ENCODE measurements at regions of chr4 and their contacts with region 1.

Region 1: GRCh38 chr4:89110986-89111832 is at the start of gene TIGD2:
- DNase-seq: peak; percentile 90
- H3K4me3 Mint-ChIP-seq: peak within 1 kb of the TSS; percentile 74
- H3K27ac Mint-ChIP-seq: no peak within 1 kb of the TSS
- H3K4me1 Mint-ChIP-seq: peaks cover 15% of the 10 kb centered on the region
- H3K27me3 Mint-ChIP-seq: peaks cover 11% of the 10 kb centered on the region
- total RNA-seq, gene TIGD2: 1.1 to 1.4 TPM

Region 2: DNA sequence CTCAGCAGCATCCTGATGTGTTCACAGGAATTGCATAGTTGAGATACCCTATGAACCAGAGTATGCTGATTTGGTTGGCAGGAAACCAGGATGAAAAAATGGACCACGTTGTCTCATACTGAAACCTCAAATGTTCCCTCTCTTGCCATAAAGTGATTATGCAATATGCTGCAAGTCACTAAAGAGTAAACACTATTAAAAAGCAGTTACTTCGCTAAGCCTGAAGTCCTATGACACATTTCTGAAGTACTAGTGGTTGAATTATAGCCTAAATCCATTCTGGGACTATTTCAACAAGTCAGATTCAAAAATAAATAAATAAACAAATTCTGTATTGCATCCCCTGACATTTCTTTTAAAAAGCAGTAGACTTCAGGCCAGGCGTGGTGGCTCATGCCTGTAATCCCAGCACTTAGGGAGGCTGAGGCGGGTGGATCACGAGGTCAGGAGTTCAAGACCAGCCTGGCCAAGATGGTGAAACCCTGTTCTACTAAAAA is 307.6 kb before region 1 on chr4:
- CTCF ChIA-PET with region 1: no interaction called
- POLR2A ChIA-PET with region 1: no interaction called
- intact Hi-C with region 1: loop called (anchors 5 kb)
- DNase-seq: peak; percentile 26
- H3K4me3 Mint-ChIP-seq: no peak overlapping the region
- H3K27ac Mint-ChIP-seq: no peak overlapping the region
- H3K4me1 Mint-ChIP-seq: peaks cover 18% of the 10 kb centered on the region
- H3K27me3 Mint-ChIP-seq: peaks cover 7% of the 10 kb centered on the region

Region 3: GRCh38 chr4:88964450-88964849 is 146.8 kb before region 1 on chr4:
- CTCF ChIA-PET with region 1: interaction called, 3 read pairs
- POLR2A ChIA-PET with region 1: no interaction called
- intact Hi-C with region 1: loop called (anchors 10 kb)
- DNase-seq: peak; percentile 15
- H3K4me3 Mint-ChIP-seq: no peak overlapping the region
- H3K27ac Mint-ChIP-seq: no peak overlapping the region
- H3K4me1 Mint-ChIP-seq: peaks cover 9% of the 10 kb centered on the region
- H3K27me3 Mint-ChIP-seq: peaks cover 2% of the 10 kb centered on the region

Region 4: DNA sequence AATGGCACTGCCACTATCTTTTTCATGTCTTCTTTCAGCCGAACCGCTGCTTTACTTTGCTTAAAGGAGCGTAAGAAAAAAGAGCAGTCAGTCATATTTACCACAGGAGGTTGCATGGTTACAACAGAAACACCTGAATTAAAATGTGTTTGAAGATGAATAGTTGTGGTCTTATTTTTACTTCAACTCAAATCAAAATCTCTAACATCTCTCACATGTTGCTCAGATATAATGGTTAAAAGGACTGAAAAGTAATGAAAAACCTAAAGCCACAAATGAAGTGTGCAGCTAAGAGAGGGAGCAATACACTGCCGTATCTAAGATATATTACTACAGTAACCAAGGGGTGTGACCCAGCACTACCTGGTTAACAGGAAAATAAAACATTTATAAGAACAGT is 81.6 kb before region 1 on chr4:
- CTCF ChIA-PET with region 1: no interaction called
- POLR2A ChIA-PET with region 1: no interaction called
- intact Hi-C with region 1: loop called (anchors 1 kb)
- DNase-seq: no peak
- H3K4me3 Mint-ChIP-seq: no peak overlapping the region
- H3K27ac Mint-ChIP-seq: no peak overlapping the region
- H3K4me1 Mint-ChIP-seq: peaks cover 12% of the 10 kb centered on the region
- H3K27me3 Mint-ChIP-seq: no peaks in the 10 kb centered on the region

Region 5: DNA sequence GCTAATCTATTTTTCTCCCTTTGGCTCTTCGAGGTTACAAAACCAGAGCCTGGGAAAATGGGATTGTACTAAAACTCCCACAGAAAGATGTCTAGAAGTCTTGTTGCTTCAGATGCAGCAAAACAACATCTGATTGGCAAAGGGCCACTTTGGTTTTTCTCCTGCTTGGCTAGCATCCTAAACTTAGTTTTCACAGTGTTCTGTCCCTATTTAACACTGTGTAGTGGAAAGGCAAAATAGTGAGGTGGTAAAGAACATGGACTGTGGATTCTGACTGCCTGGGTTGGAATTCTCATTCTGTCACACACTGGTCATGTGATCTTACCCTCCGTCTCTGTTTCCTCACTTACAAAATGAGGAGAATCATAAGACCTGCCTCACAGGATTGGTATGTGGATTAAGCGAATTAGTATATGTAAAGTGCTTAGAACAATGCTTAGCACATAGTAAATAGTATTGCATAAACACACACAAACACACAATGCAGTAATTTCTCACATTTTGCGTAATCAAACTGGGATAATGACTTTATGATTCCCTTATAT is 23.6 kb after region 1 on chr4:
- CTCF ChIA-PET with region 1: no interaction called
- POLR2A ChIA-PET with region 1: no interaction called
- intact Hi-C with region 1: no loop called
- DNase-seq: no peak
- H3K4me3 Mint-ChIP-seq: no peak overlapping the region
- H3K27ac Mint-ChIP-seq: no peak overlapping the region
- H3K4me1 Mint-ChIP-seq: no peaks in the 10 kb centered on the region
- H3K27me3 Mint-ChIP-seq: no peaks in the 10 kb centered on the region

Region 6: DNA sequence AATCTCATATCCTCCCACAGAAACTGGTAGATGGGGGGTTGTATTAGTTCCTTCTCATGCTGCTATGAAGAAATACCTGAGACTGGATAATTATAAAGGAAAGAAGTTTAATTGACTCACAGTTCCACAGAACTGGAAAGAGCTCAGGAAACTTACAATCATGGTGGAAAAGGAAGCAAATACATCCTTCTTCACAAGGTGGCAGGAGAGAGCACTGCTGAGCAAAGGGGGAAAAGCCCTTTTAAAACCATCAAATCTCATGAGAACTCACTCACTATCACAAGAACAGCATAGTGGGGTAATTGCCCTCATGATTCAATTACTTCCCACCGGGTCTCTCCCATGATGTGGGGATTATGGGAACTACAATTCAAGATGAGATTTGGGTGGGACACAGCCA is 446.9 kb after region 1 on chr4:
- CTCF ChIA-PET with region 1: no interaction called
- POLR2A ChIA-PET with region 1: no interaction called
- intact Hi-C with region 1: no loop called
- DNase-seq: no peak
- H3K4me3 Mint-ChIP-seq: no peak overlapping the region
- H3K27ac Mint-ChIP-seq: no peak overlapping the region
- H3K4me1 Mint-ChIP-seq: peaks cover 3% of the 10 kb centered on the region
- H3K27me3 Mint-ChIP-seq: no peaks in the 10 kb centered on the region